Thyroid gland (tissue), 4 donors: ENCODE measurements at regions of chr18 and their contacts with region 1.

Region 1: GRCh38 chr18:7177116-7177744 is 53.7 kb upstream of the LRRC30 start:
- DNase-seq: peak; percentile 67 to 70
- H3K4me3 ChIP-seq: no peak overlapping the region
- H3K27ac ChIP-seq: no peak overlapping the region
- H3K4me1 ChIP-seq: no peaks in the 10 kb centered on the region
- H3K27me3 ChIP-seq: no peaks in the 10 kb centered on the region
- CTCF ChIP-seq: peak in 5 of 6 experiments; percentile 22 to 84 (median 80)
- POLR2A ChIP-seq: no peak

Region 2: DNA sequence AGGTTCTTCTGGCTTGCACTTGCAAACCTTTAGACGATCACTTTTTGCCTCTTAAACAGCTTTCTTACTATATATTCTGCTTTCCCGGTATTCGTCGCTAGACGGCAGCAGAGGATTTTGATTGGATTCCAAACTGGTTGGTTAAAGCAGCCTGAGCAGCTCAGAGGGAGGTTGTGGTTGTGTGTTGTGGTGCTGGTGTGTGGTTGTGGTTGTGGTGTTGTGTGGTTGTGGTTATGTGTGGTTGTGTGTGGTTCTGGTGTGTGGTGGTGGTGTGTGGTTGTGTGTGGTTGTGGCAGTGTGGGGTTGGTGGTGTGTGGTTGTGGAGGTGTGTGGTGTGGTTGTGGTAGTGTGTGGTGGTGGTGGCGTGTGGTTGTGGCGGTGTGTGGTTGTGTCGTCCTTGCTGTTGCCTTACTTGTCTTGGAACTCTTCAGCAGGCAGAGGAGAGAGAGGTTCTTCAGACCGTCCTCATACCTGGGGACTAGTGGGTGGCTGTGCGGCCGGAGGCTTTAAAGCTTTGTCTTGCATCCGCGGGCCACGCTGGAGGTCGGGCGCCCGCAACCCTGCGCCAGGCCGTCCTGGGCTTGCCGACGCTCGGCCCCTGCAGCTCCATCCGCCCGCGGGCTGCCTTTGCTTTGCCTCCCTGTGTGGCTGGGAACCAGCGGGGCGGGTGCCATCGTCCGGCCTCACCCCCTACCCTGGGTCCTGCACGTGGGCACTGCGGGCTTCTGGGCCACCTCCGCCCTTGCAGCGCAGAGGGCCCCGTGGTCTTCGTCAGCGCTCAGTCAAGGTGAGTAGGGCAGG is 256.9 kb before region 1 on chr18:
- intact Hi-C with region 1: loop called (anchors 5 kb)
- DNase-seq: peak; percentile 50 to 60
- H3K4me3 ChIP-seq: no peak overlapping the region
- H3K27ac ChIP-seq: no peak overlapping the region
- H3K4me1 ChIP-seq: no peaks in the 10 kb centered on the region
- H3K27me3 ChIP-seq: no peaks in the 10 kb centered on the region
- CTCF ChIP-seq: peak in 4 of 6 experiments; percentile 39 to 87 (median 66)
- POLR2A ChIP-seq: no peak

Region 3: DNA sequence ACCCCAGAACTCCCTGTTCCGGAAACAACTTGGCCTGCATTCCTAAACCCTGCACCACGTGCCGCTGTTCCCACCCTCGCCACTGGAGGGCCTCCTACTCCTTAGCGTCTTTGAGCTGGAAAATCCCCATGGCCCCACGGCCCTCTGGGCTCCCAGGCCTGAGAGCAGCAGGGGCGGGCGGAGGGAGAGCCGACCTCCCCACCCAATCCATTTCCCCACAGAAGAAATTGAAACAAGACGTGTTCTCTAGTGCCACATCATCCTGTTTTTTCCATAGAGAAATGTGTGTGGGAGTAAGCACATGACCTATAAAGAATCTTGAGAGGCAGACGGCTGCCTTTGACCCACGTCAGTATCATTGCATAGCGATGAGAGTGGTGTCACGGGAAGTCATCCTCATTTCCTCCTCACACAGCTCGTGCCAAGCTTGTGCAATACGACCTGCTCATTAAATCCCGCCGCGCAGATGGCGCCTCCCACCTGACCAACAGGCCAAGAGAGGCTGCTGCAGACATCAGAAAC is 138.8 kb before region 1 on chr18:
- intact Hi-C with region 1: loop called (anchors 5 kb)
- DNase-seq: peak; percentile 77 to 91
- H3K4me3 ChIP-seq: no peak overlapping the region
- H3K27ac ChIP-seq: peak overlapping the region in 2 of 3 donors; percentile 27 to 34
- H3K4me1 ChIP-seq: peaks cover 3 to 4% of the 10 kb centered on the region in 2 donors
- H3K27me3 ChIP-seq: no peaks in the 10 kb centered on the region
- CTCF ChIP-seq: peak; percentile 45 to 93 (median 86)
- POLR2A ChIP-seq: no peak

Region 4: DNA sequence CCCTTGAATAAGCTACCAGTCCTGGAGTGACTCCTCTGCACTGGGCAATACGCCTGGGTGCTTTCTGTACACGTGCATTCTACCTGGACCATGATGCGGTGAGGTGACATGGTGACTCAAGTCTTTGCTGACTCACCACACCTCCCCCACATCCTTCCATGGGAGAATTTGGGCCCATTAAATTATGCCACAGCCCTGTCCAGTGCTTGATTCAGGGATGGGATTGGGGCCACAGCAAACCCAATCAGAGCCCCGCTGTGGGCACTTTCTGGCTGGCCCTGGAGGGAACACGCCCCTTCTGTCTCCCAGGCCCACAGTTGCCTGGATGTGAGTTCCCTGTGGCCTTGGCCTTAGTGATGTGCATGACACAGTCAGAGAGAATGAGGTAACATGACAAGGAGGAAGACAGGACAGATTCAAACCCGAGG is 140.6 kb after region 1 on chr18:
- intact Hi-C with region 1: no loop called
- DNase-seq: peak in 1 of 2 donors; percentile 3
- H3K4me3 ChIP-seq: no peak overlapping the region
- H3K27ac ChIP-seq: no peak overlapping the region
- H3K4me1 ChIP-seq: no peaks in the 10 kb centered on the region
- H3K27me3 ChIP-seq: no peaks in the 10 kb centered on the region
- CTCF ChIP-seq: no peak
- POLR2A ChIP-seq: no peak